Mucosa of descending colon (tissue), 3 donors: ENCODE measurements at regions of chr19 and their contacts with region 1.

Region 1: GRCh38 chr19:18589380-18590272 is 1.0 kb downstream of the REX1BD start:
- DNase-seq: peak; percentile 74 to 86 (median 86)
- ATAC-seq: peak; percentile 80
- H3K4me3 ChIP-seq: peak overlapping the region; percentile 70
- H3K4me1 ChIP-seq: peaks cover 17% of the 10 kb centered on the region
- CTCF ChIP-seq: peak; percentile 36

Region 2: DNA sequence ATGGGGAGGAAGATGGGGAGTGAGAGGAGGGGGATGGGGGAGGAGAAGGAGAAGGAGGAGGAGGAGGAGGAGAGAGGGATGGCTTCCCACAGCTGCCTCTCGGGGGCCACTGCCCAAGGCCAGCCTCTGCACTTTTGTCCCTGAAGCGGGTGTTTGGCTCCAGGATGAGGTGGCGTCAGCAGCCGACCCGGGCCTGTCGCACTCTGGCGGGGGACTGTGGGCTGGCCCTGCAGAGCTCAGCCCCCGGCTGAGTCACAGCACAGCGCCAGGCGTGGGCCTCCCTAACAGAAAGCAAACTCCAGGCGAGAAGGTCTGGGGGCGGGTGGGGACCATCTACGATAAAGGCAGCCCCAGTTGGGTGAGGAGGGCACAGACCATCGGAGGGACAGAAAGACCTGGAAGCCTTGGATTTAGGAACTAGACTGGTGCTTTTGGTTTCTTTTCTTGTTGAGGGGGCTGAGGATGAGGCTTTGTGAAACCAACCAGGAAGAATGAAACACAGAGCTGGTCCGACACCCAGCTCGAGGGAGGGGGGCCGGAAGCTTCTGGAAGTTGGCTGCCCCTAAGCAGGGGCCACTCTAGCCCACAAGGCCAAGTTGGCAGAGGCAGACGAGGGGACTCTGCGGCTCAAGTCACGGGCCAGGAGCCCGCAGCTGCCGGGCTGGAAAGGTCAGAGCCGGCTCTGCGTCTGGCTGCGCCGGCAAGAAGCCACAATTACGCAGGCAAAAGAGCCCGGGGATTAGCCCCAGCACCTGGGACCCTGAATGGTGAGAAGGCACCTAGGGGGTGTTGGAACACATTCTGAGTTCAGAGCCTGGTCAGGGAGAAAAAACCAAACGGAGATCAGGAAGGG is 284.9 kb before region 1 on chr19:
- intact Hi-C with region 1: no loop called
- DNase-seq: peak; percentile 69 to 88 (median 78)
- ATAC-seq: peak; percentile 67
- H3K4me3 ChIP-seq: no peak overlapping the region
- H3K4me1 ChIP-seq: peaks cover 27% of the 10 kb centered on the region
- CTCF ChIP-seq: no peak

Region 3: GRCh38 chr19:18551637-18552036 is 38.0 kb before region 1 on chr19:
- intact Hi-C with region 1: no loop called
- DNase-seq: no peak
- ATAC-seq: no peak
- H3K4me3 ChIP-seq: no peak overlapping the region
- H3K4me1 ChIP-seq: no peaks in the 10 kb centered on the region
- CTCF ChIP-seq: no peak

Region 4: DNA sequence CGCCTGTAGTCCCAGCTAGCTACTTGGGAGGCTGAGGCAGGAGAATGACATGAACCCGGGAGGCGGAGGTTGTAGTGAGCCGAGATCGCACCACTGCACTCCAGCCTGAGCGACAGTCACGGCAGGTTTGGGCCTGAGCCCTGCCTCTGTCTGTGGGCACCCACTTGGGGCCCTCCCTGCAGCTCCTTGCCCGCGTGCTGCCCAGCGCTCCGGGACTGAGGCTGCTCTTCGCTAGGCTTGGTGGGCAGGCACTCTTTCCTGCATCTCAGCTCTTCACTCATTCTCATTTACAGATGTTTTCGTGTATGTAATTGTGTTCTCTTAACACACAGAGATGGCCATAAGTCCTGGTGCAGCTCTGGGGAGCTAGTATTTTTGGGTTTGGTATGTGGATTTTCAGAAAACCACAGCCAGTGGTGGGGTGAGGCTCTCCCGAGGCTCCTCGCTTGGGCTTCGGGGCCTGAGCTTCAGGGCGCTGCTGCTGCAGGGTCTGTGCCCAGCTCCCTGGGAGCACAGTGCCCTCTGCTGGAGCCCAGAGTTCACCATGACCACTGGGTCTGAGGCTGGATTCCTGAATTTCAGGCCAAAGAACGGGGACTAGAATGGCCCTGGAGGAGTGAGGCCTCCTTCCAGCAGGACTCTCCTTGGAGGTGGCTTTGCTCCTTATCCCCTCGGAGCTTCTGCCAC is 257.4 kb after region 1 on chr19:
- intact Hi-C with region 1: loop called (anchors 5 to 10 kb)
- DNase-seq: peak; percentile 81 to 87 (median 82)
- ATAC-seq: peak; percentile 86
- H3K4me3 ChIP-seq: no peak overlapping the region
- H3K4me1 ChIP-seq: peaks cover 10% of the 10 kb centered on the region
- CTCF ChIP-seq: peak; percentile 77